Right ventricle myocardium inferior (tissue), 1 donor: ENCODE measurements at regions of chr1 and their contacts with region 1.

Region 1: GRCh38 chr1:186363891-186364290 is 11.2 kb downstream of the TPR start:
- DNase-seq: no peak
- ATAC-seq: no peak

Region 2: DNA sequence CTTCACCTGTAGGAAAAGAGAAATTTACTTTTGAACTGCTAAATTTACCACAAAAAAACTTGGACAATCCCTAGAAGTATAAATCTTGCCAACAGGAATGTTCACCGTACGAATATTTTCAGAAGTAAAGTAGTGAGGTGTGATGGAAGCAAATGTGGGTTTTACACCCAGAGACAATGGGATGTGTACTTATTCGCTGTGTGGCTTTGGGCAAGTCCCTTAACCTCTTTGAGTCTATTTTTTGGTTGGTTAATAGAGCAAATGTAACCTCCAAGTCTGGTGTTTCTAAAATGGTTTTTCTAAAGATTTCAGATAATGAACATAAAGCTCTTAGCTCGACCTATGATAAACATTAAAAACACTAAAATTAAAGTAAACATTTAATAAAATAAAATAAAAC is 40.0 kb before region 1 on chr1:
- intact Hi-C with region 1: loop called (anchors 5 kb)
- DNase-seq: no peak
- ATAC-seq: no peak